ENCODE measurements at regions of chr10 and their contacts with region 1.

Region 1: DNA sequence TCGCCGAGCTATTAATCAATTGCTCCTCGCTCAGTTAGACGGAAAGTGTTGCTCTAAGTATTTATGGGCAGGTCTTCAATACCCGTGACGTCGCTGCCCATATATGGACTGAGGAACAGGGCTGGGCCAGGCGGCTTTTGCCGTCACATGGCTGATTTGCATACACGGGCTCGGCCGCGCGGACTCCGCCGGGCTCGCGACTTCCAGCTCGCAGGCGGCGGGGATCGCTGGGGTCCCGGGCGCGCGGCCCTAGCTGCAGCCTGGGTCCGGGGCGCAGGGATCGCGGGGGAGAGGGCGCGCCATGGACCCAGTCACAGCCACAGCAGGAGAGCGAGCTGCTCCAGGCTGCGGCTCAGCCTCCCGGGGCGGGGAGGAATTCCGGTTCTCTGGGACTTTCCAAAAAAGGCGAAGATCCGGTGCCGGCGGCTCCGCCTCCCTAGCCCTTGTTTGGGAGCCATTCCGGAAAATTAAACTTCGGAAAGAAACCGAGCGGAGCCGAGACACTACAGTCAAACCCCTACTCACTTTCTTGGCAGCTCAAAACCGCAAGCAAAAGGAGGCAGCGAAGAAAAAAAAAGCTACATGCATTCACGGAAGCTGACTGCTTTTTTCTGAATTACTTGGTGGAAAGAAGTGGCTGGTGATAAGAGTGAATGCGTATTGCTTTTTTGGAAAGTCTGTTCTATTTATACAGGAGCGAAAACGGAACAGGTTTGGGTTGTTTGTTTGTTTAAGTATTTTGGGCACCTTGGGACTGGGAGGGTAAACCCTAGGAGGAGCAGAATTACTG is at the start of gene EGR2:
- DNase-seq: peak; percentile 96 to 97
- H3K4me3 ChIP-seq: peak within 1 kb of the TSS; percentile 55
- H3K4me3 Mint-ChIP-seq: peak within 1 kb of the TSS; percentile 87
- H3K27ac Mint-ChIP-seq: peak within 1 kb of the TSS; percentile 74
- H3K4me1 ChIP-seq: peaks cover 17% of the 10 kb centered on the region
- H3K4me1 Mint-ChIP-seq: peaks cover 20% of the 10 kb centered on the region
- H3K27me3 ChIP-seq: peaks cover 16% of the 10 kb centered on the region
- H3K27me3 Mint-ChIP-seq: peaks cover 40% of the 10 kb centered on the region
- CTCF ChIP-seq: no peak
- total RNA-seq, gene EGR2: 0.30 and 0.61 TPM in 2 replicates

Region 2: GRCh38 chr10:62268399-62269114 is 548.0 kb before region 1 on chr10 and contains the start of gene RTKN2:
- CTCF ChIA-PET with region 1: no interaction called
- POLR2A ChIA-PET with region 1: interaction called, 3 read pairs
- intact Hi-C with region 1: loop called (anchors 10 kb)
- DNase-seq: peak; percentile 99 to 100
- H3K4me3 ChIP-seq: peak within 1 kb of the TSS; percentile 66
- H3K4me3 Mint-ChIP-seq: peak within 1 kb of the TSS; percentile 78
- H3K27ac Mint-ChIP-seq: peak within 1 kb of the TSS; percentile 61
- H3K4me1 ChIP-seq: peaks cover 23% of the 10 kb centered on the region
- H3K4me1 Mint-ChIP-seq: peaks cover 26% of the 10 kb centered on the region
- H3K27me3 ChIP-seq: no peaks in the 10 kb centered on the region
- H3K27me3 Mint-ChIP-seq: peaks cover 7% of the 10 kb centered on the region
- CTCF ChIP-seq: no peak
- total RNA-seq, gene RTKN2: 36.2 and 37.1 TPM in 2 replicates

Region 3: GRCh38 chr10:62594093-62594520 is 222.4 kb before region 1 on chr10:
- CTCF ChIA-PET with region 1: interaction called, 23 read pairs
- POLR2A ChIA-PET with region 1: no interaction called
- intact Hi-C with region 1: loop called (anchors 1 kb)
- DNase-seq: peak; percentile 68 to 82
- H3K4me3 ChIP-seq: no peak overlapping the region
- H3K4me3 Mint-ChIP-seq: no peak overlapping the region
- H3K27ac Mint-ChIP-seq: no peak overlapping the region
- H3K4me1 ChIP-seq: no peaks in the 10 kb centered on the region
- H3K4me1 Mint-ChIP-seq: no peaks in the 10 kb centered on the region
- H3K27me3 ChIP-seq: no peaks in the 10 kb centered on the region
- H3K27me3 Mint-ChIP-seq: peaks cover 12% of the 10 kb centered on the region
- CTCF ChIP-seq: peak; percentile 99

Region 4: GRCh38 chr10:62748386-62748785 is 68.1 kb before region 1 on chr10:
- CTCF ChIA-PET with region 1: interaction called, 5 read pairs
- POLR2A ChIA-PET with region 1: no interaction called
- intact Hi-C with region 1: loop called (anchors 5 kb)
- DNase-seq: no peak
- H3K4me3 ChIP-seq: no peak overlapping the region
- H3K4me3 Mint-ChIP-seq: no peak overlapping the region
- H3K27ac Mint-ChIP-seq: no peak overlapping the region
- H3K4me1 ChIP-seq: no peaks in the 10 kb centered on the region
- H3K4me1 Mint-ChIP-seq: no peaks in the 10 kb centered on the region
- H3K27me3 ChIP-seq: no peaks in the 10 kb centered on the region; the same call in 1 of the 2 replicates
- H3K27me3 Mint-ChIP-seq: no peaks in the 10 kb centered on the region
- CTCF ChIP-seq: no peak

Region 5: DNA sequence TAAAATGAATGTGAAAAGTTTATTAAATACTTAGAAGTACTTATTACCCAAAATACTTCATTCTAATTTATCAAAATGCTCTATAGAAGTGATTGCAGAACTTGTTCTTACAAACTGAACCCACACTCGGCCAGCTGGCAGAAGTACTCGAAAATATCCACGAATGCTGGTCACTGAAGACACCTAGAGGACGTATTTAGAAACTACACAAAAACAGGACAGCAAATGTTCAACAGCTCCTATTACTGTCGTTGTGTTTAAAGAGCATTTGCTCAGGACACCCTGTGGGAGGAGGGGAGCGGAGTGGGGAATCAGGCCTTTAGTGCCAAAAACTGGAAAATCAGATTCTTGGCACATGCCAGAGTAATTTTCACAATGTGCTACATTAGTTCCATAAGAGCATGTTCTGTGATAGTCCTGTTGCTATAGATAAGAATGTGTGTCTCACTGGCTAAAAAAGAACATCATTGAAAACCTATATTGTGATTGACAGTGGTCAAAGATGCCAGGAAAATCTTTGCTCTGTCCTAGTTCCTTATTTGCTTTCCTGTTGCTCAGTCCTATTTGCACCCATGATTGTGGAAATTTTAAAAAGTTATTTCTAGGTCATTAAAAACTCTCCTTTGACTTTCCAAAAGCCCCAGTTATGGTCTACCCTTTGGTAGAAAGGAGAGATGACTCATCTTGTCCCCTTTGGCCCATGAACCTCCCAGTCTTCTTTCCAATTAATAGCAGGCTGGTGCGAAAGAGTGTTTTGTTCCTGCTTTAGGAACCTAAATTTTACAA is 267.6 kb after region 1 on chr10:
- CTCF ChIA-PET with region 1: interaction called, 6 read pairs
- POLR2A ChIA-PET with region 1: no interaction called
- intact Hi-C with region 1: loop called (anchors 1 kb)
- DNase-seq: peak; percentile 54 to 69
- H3K4me3 ChIP-seq: no peak overlapping the region
- H3K4me3 Mint-ChIP-seq: no peak overlapping the region
- H3K27ac Mint-ChIP-seq: no peak overlapping the region
- H3K4me1 ChIP-seq: no peaks in the 10 kb centered on the region
- H3K4me1 Mint-ChIP-seq: no peaks in the 10 kb centered on the region
- H3K27me3 ChIP-seq: no peaks in the 10 kb centered on the region
- H3K27me3 Mint-ChIP-seq: peaks cover 32% of the 10 kb centered on the region
- CTCF ChIP-seq: peak; percentile 86 to 90